Caco-2 (cell line): ENCODE measurements at regions of chr22 and their contacts with region 1.

Region 1: GRCh38 chr22:37166675-37167066 is 17.0 kb upstream of the IL2RB start:
- DNase-seq: peak; percentile 79 to 80
- H3K4me3 ChIP-seq: no peak overlapping the region
- H3K4me3 Mint-ChIP-seq: no peak overlapping the region
- H3K27ac Mint-ChIP-seq: no peak overlapping the region
- H3K4me1 ChIP-seq: peaks cover 6% of the 10 kb centered on the region; the same call in 1 of the 2 replicates
- H3K4me1 Mint-ChIP-seq: no peaks in the 10 kb centered on the region
- H3K27me3 ChIP-seq: no peaks in the 10 kb centered on the region
- H3K27me3 Mint-ChIP-seq: no peaks in the 10 kb centered on the region
- CTCF ChIP-seq: peak; percentile 75 to 86

Region 2: DNA sequence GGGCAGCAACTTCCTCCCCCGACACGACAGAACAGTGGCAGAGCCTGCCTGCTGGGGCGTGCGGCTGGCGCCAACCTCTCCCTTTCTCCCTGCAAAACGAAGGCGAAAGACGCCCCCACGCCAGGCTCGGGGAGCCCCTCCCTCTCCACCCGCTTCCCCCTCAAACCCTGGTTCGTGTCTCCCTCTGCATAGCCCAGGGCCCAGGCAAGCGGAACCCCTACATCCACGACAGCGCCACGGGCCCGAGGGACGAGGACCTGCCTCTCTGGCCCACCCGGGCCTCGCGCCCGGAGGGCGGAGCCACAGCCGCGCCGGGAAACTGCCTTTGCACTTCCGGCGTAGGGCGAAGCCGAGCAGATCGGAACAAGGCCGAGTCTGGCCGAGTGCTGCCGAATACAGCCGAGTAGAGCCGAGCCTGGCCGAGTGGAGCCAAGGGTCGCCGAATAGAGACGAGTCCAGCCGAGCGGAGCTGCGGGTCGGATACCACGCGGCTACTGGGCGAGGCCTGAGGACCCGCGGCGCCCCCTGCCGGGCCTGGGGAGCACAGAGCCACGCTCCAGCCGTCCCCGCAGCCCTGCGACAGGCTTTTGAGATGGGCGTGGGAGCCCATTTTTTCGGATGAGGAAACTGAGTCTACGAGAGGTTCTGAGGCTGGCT is 32.6 kb after region 1 on chr22:
- CTCF ChIA-PET with region 1: interaction called, 8 read pairs
- POLR2A ChIA-PET with region 1: no interaction called
- intact Hi-C with region 1: loop called (anchors 1 kb)
- DNase-seq: peak; percentile 97 to 99
- H3K4me3 ChIP-seq: peak overlapping the region; percentile 68
- H3K4me3 Mint-ChIP-seq: peak overlapping the region; percentile 90
- H3K27ac Mint-ChIP-seq: peak overlapping the region; percentile 59
- H3K4me1 ChIP-seq: peaks cover 48% of the 10 kb centered on the region
- H3K4me1 Mint-ChIP-seq: peaks cover 26% of the 10 kb centered on the region
- H3K27me3 ChIP-seq: no peaks in the 10 kb centered on the region; the same call in 1 of the 2 replicates
- H3K27me3 Mint-ChIP-seq: no peaks in the 10 kb centered on the region
- CTCF ChIP-seq: peak; percentile 89 to 95

Region 3: DNA sequence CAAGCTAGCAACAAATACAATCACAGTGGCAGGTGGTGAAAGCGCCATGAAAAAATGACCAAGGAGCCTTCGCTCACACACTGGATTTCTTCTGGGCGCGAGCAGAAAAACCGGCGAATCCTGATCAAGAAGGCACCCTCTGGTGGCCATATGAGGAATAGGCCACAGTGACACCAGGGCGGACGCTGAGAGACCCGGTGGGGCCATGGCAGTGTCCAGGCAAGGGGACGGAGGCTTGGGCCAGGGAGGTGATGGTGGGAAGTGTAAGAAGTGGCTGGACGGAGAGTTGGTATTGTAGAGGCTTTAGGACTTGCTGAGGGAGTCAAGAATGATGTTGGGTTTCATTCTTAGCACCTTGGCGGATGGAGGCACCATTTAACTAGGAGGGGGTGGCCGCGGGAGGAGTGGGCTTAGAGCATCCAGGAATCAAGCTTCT is 94.2 kb after region 1 on chr22:
- CTCF ChIA-PET with region 1: no interaction called
- POLR2A ChIA-PET with region 1: no interaction called
- intact Hi-C with region 1: loop called (anchors 2 kb)
- DNase-seq: peak; percentile 65 to 67
- H3K4me3 ChIP-seq: no peak overlapping the region
- H3K4me3 Mint-ChIP-seq: no peak overlapping the region
- H3K27ac Mint-ChIP-seq: no peak overlapping the region
- H3K4me1 ChIP-seq: no peaks in the 10 kb centered on the region
- H3K4me1 Mint-ChIP-seq: no peaks in the 10 kb centered on the region
- H3K27me3 ChIP-seq: no peaks in the 10 kb centered on the region; the same call in 1 of the 2 replicates
- H3K27me3 Mint-ChIP-seq: peaks cover 6% of the 10 kb centered on the region
- CTCF ChIP-seq: peak; percentile 85 to 90